ENCODE measurements at regions of chr5 and their contacts with region 1.

Region 1: GRCh38 chr5:157471709-157472108 is 11.7 kb downstream of the NIPAL4 start:
- DNase-seq: peak; percentile 25
- H3K4me3 ChIP-seq: no peak overlapping the region
- H3K27ac ChIP-seq: no peak overlapping the region
- H3K4me1 ChIP-seq: no peaks in the 10 kb centered on the region
- H3K27me3 ChIP-seq: no peaks in the 10 kb centered on the region
- CTCF ChIP-seq: peak; percentile 72 to 73

Region 2: DNA sequence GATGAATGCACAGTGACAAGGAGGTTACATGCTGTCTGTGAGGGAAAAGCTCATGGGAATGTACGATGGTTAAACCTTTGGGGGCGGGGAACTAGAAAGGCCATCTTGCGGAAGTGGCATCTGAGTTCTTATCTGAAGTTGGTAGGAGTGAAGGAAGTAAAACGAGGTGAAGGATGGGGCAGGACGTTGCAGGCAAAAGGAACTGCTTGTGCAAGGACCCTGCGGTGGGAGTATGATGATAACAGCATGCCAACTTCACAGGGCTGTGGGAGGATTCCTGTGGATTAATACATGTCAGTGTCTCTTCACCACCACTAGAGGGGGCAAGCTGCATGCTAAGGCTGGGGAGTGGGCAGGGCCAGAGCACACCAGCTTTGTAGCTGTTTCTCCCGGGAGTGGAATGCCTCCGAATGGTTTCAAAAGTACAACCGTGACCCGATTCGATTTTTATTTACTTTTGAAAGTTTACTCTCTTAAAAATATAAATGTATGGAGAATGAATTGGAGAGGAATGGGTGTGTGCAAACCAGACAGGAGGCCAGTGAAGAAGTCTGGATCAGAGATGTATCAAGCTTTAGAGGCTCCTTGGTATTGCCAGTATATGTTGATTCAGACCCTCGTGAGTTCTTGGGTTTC is 143.3 kb before region 1 on chr5:
- CTCF ChIA-PET with region 1: no interaction called
- dilution Hi-C with region 1: loop called (anchors 10 kb)
- in situ Hi-C with region 1: loop called in 1 of 2 experiments (anchors 5 kb)
- intact Hi-C with region 1: loop called (anchors 1 kb)
- DNase-seq: peak; percentile 52
- H3K4me3 ChIP-seq: peak overlapping the region in 1 of 3 experiments; percentile 34
- H3K27ac ChIP-seq: no peak overlapping the region
- H3K4me1 ChIP-seq: no peaks in the 10 kb centered on the region
- H3K27me3 ChIP-seq: no peaks in the 10 kb centered on the region
- CTCF ChIP-seq: peak; percentile 97

Region 3: GRCh38 chr5:157342822-157343402 is 128.8 kb before region 1 on chr5:
- CTCF ChIA-PET with region 1: no interaction called
- dilution Hi-C with region 1: no loop called
- in situ Hi-C with region 1: loop called in 1 of 2 experiments (anchors 5 kb)
- intact Hi-C with region 1: loop called (anchors 2 kb)
- DNase-seq: peak; percentile 6
- H3K4me3 ChIP-seq: no peak overlapping the region
- H3K27ac ChIP-seq: no peak overlapping the region
- H3K4me1 ChIP-seq: no peaks in the 10 kb centered on the region
- H3K27me3 ChIP-seq: no peaks in the 10 kb centered on the region
- CTCF ChIP-seq: peak; percentile 61 to 76